Thyroid gland (tissue), 4 donors: ENCODE measurements at regions of chr6 and their contacts with region 1.

Region 1: GRCh38 chr6:7276199-7276524 is 36.8 kb downstream of the SSR1 start:
- DNase-seq: no peak
- H3K4me3 ChIP-seq: no peak overlapping the region
- H3K27ac ChIP-seq: no peak overlapping the region
- H3K4me1 ChIP-seq: peaks cover 19 to 21% of the 10 kb centered on the region in 2 donors
- H3K27me3 ChIP-seq: no peaks in the 10 kb centered on the region
- CTCF ChIP-seq: no peak
- POLR2A ChIP-seq: no peak

Region 2: DNA sequence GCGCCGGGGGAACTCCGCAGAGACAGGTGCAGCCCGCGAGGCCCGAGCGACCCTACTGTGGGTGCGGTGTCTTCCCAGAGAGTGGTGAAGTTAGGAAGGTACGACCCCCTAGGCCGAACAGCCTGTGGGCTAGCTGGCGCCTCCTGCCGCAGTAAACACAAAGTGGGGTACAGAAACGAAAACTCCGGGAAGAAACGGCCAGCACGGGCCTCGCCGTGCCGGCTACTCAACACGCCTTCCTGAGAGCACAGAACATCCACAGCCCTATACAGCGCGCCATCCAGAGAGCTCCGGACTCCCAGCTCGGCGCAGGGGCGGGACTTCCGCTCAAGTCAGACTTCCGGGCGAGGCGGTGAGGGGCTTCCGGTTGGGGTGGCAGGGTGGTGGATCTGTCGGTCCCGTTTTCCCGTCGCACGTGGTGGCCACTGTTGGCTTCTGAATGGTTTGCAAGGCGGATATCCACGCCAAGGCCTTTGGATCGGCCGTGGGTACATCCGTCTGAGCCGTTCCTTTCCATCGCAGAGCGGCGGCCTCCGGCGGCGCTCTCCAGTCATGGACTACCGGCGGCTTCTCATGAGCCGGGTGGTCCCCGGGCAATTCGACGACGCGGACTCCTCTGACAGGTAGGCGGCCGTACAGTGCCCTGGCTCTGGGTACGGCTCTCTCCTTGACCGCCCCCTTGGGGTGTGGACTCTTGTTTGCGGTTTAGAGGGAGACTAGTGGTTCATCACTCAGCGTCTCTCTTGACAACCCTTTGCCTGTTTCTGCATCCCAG is 113.5 kb after region 1 on chr6 and contains the starts of genes CAGE1 and RIOK1:
- intact Hi-C with region 1: loop called (anchors 5 kb)
- DNase-seq: peak; percentile 97
- H3K4me3 ChIP-seq: peak within 1 kb of the TSS; percentile 43 to 86 (median 78)
- H3K27ac ChIP-seq: peak within 1 kb of the TSS; percentile 58 to 88 (median 85)
- H3K4me1 ChIP-seq: peaks cover 11 to 22% of the 10 kb centered on the region in 2 donors
- H3K27me3 ChIP-seq: no peaks in the 10 kb centered on the region
- CTCF ChIP-seq: peak in 2 of 6 experiments; percentile 4 to 15
- POLR2A ChIP-seq: peak in 1 of 2 donors; percentile 90
- total RNA-seq, gene CAGE1: 0.20 TPM in 1 of 4 donors, not detected in the others
- total RNA-seq, gene RIOK1: 11.3 to 17.5 (median 15.8) TPM

Region 3: GRCh38 chr6:7615611-7616383 is 339.6 kb after region 1 on chr6:
- intact Hi-C with region 1: loop called (anchors 5 kb)
- DNase-seq: peak; percentile 35 to 43
- H3K4me3 ChIP-seq: no peak overlapping the region
- H3K27ac ChIP-seq: no peak overlapping the region
- H3K4me1 ChIP-seq: peaks cover 0 to 10% of the 10 kb centered on the region in 2 donors
- H3K27me3 ChIP-seq: no peaks in the 10 kb centered on the region
- CTCF ChIP-seq: peak in 5 of 6 experiments; percentile 41 to 87 (median 82)
- POLR2A ChIP-seq: no peak